ENCODE measurements at regions of chr4 and their contacts with region 1.

Region 1: GRCh38 chr4:134297765-134298164 is 96.2 kb upstream of the PABPC4L start:
- DNase-seq: no peak

Region 2: DNA sequence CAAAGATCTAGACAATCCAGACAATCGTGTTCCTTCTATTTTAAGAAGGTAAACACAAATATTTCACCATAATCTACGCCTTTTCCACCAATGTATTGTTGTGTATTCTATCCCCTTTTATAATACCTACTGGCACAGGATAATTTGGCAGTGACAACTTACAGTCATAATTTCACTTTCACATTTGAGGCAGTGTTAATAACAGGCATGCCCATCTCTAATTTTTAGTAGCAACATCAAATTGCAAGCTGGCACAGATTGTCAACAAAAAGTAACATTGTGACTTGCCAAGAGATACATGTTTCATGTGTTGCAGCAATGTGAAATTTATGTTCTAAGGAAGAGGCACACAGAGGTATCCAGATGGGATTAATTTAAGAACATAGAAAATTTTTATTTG is 816.3 kb after region 1 on chr4:
- intact Hi-C with region 1: loop called in 1 of 2 experiments (anchors 5 kb)
- DNase-seq: no peak